ENCODE measurements at regions of chr16 and their contacts with region 1.

Region 1: GRCh38 chr16:19555162-19555937 is at the start of gene VPS35L:
- DNase-seq: peak; percentile 99
- H3K4me3 ChIP-seq: peak within 1 kb of the TSS; percentile 78 to 93 (median 90)
- H3K27ac ChIP-seq: peak within 1 kb of the TSS; percentile 86 to 89 (median 88)
- H3K4me1 ChIP-seq: peaks cover 5 to 32% (median 23%) of the 10 kb centered on the region in 4 donors
- H3K27me3 ChIP-seq: no peaks in the 10 kb centered on the region
- CTCF ChIP-seq: peak; percentile 65 to 74 (median 70)
- EP300 ChIP-seq: no peak
- POLR2A ChIP-seq: no peak
- total RNA-seq, gene VPS35L: 35.5 to 47.0 (median 38.1) TPM

Region 2: GRCh38 chr16:19589771-19590302 is 34.5 kb after region 1 on chr16:
- intact Hi-C with region 1: loop called (anchors 5 kb)
- DNase-seq: no peak
- H3K4me3 ChIP-seq: no peak overlapping the region
- H3K27ac ChIP-seq: peak overlapping the region; percentile 47 to 63 (median 56)
- H3K4me1 ChIP-seq: peaks cover 17 to 30% (median 28%) of the 10 kb centered on the region in 4 donors
- H3K27me3 ChIP-seq: no peaks in the 10 kb centered on the region
- CTCF ChIP-seq: no peak
- EP300 ChIP-seq: no peak
- POLR2A ChIP-seq: no peak

Region 3: DNA sequence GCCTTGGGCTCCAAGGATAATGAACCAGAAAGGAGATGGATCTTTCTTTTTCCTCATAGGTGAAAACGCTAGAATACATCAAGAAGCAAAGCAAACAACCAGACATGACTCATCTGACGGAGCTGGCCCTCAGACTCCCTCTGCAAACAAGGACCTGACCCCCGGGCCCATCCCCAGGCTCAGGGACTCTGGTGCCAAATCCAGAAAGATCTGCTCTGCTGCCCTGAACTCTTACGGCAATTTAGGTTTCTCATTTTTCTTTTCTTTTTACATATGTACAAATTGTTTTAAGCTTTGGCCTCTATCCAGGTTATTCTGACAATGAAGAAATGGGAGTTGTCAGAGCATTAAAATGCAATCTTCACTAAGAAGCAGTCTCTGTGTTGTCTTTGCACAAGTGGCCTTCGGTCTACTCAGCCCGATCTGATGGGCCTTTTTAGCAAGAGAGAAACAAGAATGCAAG is 145.0 kb after region 1 on chr16:
- intact Hi-C with region 1: no loop called
- DNase-seq: no peak
- H3K4me3 ChIP-seq: no peak overlapping the region
- H3K27ac ChIP-seq: peak overlapping the region; percentile 50 to 71 (median 70)
- H3K4me1 ChIP-seq: peaks cover 63 to 73% (median 66%) of the 10 kb centered on the region in 4 donors
- H3K27me3 ChIP-seq: no peaks in the 10 kb centered on the region
- CTCF ChIP-seq: no peak
- EP300 ChIP-seq: no peak
- POLR2A ChIP-seq: no peak

Region 4: GRCh38 chr16:19717771-19718602 is 162.6 kb after region 1 on chr16 and contains the starts of genes IQCK and KNOP1:
- intact Hi-C with region 1: loop called (anchors 10 kb)
- DNase-seq: peak; percentile 97
- H3K4me3 ChIP-seq: peak within 1 kb of the TSS; percentile 86 to 97 (median 92)
- H3K27ac ChIP-seq: peak within 1 kb of the TSS; percentile 77 to 93 (median 86)
- H3K4me1 ChIP-seq: peaks cover 29 to 40% (median 34%) of the 10 kb centered on the region in 4 donors
- H3K27me3 ChIP-seq: no peaks in the 10 kb centered on the region
- CTCF ChIP-seq: peak in 1 of 3 experiments; percentile 10
- EP300 ChIP-seq: no peak
- POLR2A ChIP-seq: peak; percentile 51
- total RNA-seq, gene IQCK: 7.4 to 10.4 (median 8.6) TPM
- total RNA-seq, gene KNOP1: 7.3 to 9.9 (median 9.1) TPM